Heart left ventricle (tissue), 16 donors: ENCODE measurements at regions of chr2 and their contacts with region 1.

Region 1: GRCh38 chr2:32277674-32278482 is at the start of gene YIPF4:
- DNase-seq: peak; percentile 85 to 88 (median 87)
- ATAC-seq: peak; percentile 96 to 99 (median 99)
- H3K4me3 ChIP-seq: peak within 1 kb of the TSS; percentile 57 to 100 (median 84)
- H3K27ac ChIP-seq: peak within 1 kb of the TSS; percentile 62 to 97 (median 88)
- H3K4me1 ChIP-seq: peaks cover 0 to 39% (median 24%) of the 10 kb centered on the region in 12 donors
- H3K27me3 ChIP-seq: no peaks in the 10 kb centered on the region
- CTCF ChIP-seq: no peak
- POLR2A ChIP-seq: peak in 1 of 2 donors; percentile 75
- total RNA-seq, gene YIPF4: 14.9 to 79.3 (median 64.4) TPM

Region 2: DNA sequence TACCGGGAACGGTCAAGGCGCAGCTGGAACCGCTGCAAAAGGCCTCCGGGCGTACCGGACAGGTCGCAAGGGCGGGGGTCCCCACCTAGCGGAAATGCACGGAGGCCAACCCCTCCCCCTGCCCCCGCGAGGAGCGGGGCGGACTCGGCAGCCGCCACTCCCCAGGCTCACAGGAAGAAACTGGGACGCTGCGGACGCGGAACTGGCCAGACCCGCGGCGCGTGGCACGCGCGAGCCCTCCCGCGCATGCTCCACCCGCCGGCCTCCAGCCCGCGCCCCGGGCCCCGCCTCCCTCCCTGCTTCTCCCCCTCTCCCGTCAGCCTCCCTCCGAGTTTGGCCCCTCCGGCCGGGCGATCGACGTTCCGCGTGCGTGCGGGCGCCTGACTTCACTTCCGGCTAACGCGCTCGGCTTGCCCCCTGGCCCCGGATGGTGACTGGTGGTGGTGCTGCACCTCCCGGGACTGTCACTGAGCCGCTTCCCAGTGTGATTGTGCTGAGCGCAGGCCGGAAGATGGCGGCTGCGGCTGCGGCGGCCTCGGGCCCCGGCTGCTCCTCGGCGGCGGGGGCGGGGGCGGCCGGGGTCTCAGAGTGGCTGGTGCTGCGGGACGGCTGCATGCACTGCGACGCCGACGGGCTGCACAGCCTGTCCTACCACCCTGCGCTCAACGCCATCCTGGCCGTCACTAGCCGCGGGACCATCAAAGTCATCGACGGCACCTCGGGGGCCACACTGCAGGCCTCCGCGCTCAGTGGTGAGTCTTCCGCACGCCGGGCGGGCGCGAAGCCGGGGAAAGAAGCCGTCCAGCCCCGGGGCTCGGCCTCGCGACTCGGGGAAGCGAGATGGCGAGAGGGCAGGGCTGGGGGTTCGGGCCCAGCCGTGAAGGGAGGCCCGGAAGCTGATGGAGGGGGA is 79.1 kb after region 1 on chr2 and contains the start of gene BIRC6:
- intact Hi-C with region 1: loop called in 2 of 10 experiments (anchors 2 to 5 kb)
- DNase-seq: peak; percentile 98 to 99 (median 99)
- ATAC-seq: peak; percentile 96 to 98 (median 97)
- H3K4me3 ChIP-seq: peak within 1 kb of the TSS; percentile 73 to 100 (median 95)
- H3K27ac ChIP-seq: peak within 1 kb of the TSS; percentile 85 to 98 (median 93)
- H3K4me1 ChIP-seq: peaks cover 10 to 48% (median 29%) of the 10 kb centered on the region in 12 donors
- H3K27me3 ChIP-seq: no peaks in the 10 kb centered on the region
- CTCF ChIP-seq: no peak
- POLR2A ChIP-seq: peak; percentile 29 to 89
- total RNA-seq, gene BIRC6: 36.1 to 68.0 (median 55.8) TPM